Activated CD4-positive, alpha-beta T cell treated with anti-CD3 and anti-CD28 coated beads for 36 hours (primary cell): ENCODE measurements at regions of chr7 and their contacts with region 1.

Region 1: GRCh38 chr7:106346678-106347217 is 62.0 kb upstream of the NAMPT start:
- DNase-seq: peak; percentile 65
- ATAC-seq: peak; percentile 73
- H3K4me3 Mint-ChIP-seq: peak overlapping the region; percentile 66
- H3K27ac Mint-ChIP-seq: peak overlapping the region; percentile 100
- H3K4me1 Mint-ChIP-seq: peaks cover 54% of the 10 kb centered on the region
- H3K27me3 Mint-ChIP-seq: peaks cover 12% of the 10 kb centered on the region

Region 2: DNA sequence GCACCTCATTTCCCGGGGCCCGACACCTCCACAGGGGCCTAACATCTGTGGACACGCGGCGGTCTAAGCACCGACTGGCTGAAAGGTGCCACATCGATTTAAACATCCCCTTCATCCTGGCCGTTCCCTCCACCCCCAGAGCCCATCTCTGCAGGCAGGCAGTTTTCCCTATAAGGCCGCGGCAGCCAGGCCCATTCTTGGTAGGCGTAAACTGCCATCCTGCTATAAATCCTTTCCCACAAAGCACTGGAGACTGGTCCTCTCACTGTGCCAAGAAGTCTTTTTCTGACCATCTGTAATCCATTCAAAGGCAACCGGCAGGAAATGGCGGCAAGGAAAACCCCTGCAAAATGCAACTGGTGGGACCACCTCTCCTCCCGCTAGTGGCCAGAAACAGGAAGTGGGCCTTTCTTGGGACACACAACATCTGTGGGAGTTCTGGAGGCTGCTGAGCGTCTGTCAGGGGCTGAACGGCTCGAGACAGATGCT is 492.8 kb before region 1 on chr7:
- CTCF ChIA-PET with region 1: no interaction called
- POLR2A ChIA-PET with region 1: no interaction called
- intact Hi-C with region 1: no loop called
- DNase-seq: no peak
- ATAC-seq: no peak
- H3K4me3 Mint-ChIP-seq: no peak overlapping the region
- H3K27ac Mint-ChIP-seq: no peak overlapping the region
- H3K4me1 Mint-ChIP-seq: peaks cover 62% of the 10 kb centered on the region
- H3K27me3 Mint-ChIP-seq: no peaks in the 10 kb centered on the region

Region 3: DNA sequence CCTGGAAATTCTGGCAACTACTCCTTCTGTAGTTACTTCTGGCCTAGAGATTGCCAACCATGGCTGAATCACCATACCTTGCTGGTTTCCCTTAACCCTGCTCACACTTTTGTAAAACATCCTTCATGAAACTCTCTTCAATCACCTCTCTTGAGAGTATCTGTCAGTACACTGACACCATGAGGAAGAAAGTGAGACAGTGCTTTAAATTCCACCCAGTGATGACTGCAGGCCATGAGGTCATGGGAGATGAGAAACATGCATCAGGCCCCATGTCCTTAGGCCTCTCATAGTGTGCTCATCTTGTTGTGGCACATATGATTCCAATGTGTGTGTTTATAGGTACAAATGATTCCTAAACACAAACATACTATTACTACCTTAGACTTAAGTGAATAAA is 37.4 kb before region 1 on chr7:
- CTCF ChIA-PET with region 1: no interaction called
- POLR2A ChIA-PET with region 1: no interaction called
- intact Hi-C with region 1: loop called in 1 of 2 experiments (anchors 1 kb)
- DNase-seq: peak; percentile 63
- ATAC-seq: peak; percentile 96
- H3K4me3 Mint-ChIP-seq: no peak overlapping the region
- H3K27ac Mint-ChIP-seq: peak overlapping the region; percentile 32
- H3K4me1 Mint-ChIP-seq: peaks cover 28% of the 10 kb centered on the region
- H3K27me3 Mint-ChIP-seq: peaks cover 17% of the 10 kb centered on the region

Region 4: DNA sequence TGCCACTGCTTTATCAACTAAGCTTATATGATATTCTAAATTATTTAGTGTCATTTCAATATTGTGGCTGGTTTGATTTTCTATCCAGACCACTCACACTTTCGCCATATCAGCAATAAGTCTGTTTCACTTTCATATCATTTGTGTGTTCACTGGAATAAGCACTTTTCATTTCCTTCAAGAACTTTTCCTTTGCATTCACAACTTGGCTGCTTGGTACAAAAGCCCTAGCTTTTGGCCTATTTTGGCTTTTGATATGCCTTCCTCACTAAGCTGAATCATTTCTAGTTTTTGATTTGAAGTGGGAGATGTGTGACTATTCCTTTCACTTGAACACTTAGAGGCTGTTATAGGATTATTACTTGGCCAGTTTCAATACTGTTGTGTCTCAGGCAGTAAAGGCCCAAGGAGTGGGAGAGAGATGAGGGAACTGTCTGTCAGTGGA is 59.0 kb after region 1 on chr7:
- CTCF ChIA-PET with region 1: interaction called, 3 read pairs
- POLR2A ChIA-PET with region 1: interaction called, 4 read pairs
- intact Hi-C with region 1: loop called (anchors 1 kb)
- DNase-seq: peak; percentile 39
- ATAC-seq: peak; percentile 98
- H3K4me3 Mint-ChIP-seq: peak overlapping the region; percentile 8
- H3K27ac Mint-ChIP-seq: peak overlapping the region; percentile 55
- H3K4me1 Mint-ChIP-seq: peaks cover 38% of the 10 kb centered on the region
- H3K27me3 Mint-ChIP-seq: peaks cover 35% of the 10 kb centered on the region

Region 5: DNA sequence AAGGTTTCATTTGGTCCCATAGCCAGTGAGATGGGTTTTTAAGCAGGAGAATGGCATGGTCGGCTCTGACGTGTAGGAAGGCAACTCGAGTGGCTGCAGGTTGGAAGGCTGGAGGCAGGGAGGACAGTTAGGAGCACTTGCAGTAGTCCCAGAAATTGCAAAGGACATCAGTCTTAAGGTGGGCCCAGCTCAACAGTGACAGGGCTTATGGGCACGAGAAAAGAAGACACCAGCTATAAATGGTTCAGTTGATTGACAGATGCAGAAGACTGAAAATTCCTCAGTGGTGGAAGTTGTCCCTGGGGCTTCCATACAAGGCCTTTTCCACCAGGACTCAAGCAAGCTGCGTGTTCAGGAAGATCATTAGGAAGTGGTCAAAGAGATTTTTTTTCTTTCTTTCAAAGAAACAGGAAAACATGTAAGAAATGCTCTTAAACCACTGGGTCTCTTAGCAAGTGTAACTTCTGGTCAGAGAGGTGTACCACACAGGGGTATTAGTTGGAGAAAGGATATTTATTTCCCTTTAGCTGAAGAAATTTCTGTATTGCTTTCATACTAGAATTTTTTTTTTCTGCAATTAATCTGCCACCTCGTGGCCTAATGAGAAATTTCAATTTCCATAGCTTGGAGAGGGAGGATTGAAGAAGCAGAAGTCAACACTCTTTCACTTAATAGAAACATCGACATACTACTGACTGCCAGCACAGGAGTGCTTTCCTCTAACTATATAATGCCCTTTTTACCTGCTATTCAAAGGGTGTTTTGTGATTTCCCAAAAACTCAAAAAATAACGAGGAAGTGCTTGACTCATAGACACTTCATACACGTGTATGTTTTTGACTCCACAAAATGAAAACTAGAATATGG is 115.5 kb after region 1 on chr7:
- CTCF ChIA-PET with region 1: interaction called, 4 read pairs
- POLR2A ChIA-PET with region 1: interaction called, 6 read pairs
- intact Hi-C with region 1: loop called (anchors 1 kb)
- DNase-seq: no peak
- ATAC-seq: peak; percentile 69
- H3K4me3 Mint-ChIP-seq: peak overlapping the region; percentile 8
- H3K27ac Mint-ChIP-seq: peak overlapping the region; percentile 75
- H3K4me1 Mint-ChIP-seq: peaks cover 36% of the 10 kb centered on the region
- H3K27me3 Mint-ChIP-seq: no peaks in the 10 kb centered on the region

Region 6: GRCh38 chr7:106772655-106773108 is 425.9 kb after region 1 on chr7:
- CTCF ChIA-PET with region 1: no interaction called
- POLR2A ChIA-PET with region 1: no interaction called
- intact Hi-C with region 1: loop called in 1 of 2 experiments (anchors 2 kb)
- DNase-seq: no peak
- ATAC-seq: peak; percentile 79
- H3K4me3 Mint-ChIP-seq: peak overlapping the region; percentile 27
- H3K27ac Mint-ChIP-seq: peak overlapping the region; percentile 91
- H3K4me1 Mint-ChIP-seq: peaks cover 66% of the 10 kb centered on the region
- H3K27me3 Mint-ChIP-seq: no peaks in the 10 kb centered on the region